ENCODE measurements at regions of chr10 and their contacts with region 1.

Region 1: GRCh38 chr10:58282615-58283014 is 13.7 kb downstream of the CISD1 start:
- DNase-seq: peak; percentile 32
- H3K4me3 Mint-ChIP-seq: peak overlapping the region; percentile 38
- H3K27ac Mint-ChIP-seq: peak overlapping the region; percentile 1
- H3K4me1 Mint-ChIP-seq: peaks cover 31% of the 10 kb centered on the region
- H3K27me3 Mint-ChIP-seq: no peaks in the 10 kb centered on the region

Region 2: DNA sequence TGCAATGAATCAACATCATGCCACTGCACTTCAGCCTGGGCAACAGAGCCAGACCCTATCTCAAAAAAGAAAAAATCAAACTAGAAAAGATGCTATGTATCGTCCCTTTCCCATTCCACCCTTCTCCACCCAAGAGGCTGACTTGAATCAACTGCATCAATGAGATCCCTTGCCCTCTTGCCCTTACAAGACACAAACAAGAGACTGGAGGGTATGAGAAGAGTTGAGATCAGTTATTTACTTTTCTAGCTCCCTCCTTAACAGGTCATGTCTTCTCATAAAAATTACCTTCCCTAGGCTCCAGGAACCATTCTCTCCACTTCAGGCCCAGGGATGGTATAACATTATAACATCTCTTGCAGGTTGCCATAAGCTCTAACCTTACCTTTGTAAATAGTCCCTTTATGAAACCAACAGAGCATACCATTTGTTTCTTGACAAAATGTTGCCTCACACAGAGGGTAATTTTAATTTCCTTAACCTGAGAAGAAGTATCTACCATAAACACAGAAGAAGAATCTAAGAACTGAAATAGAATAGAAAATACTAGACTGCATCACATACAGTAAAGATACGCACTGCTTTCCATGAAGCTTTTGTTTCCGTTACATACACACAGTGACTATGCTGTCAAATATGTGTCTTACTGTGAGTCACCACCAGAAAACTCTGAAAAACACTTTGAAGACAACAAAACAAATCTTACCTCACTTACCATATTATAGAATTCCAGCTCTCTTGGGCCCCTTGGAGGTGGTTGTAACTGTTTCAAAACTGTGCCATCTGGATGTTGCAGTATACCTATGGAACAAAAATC is 45.4 kb before region 1 on chr10:
- intact Hi-C with region 1: loop called (anchors 1 kb)
- DNase-seq: no peak
- H3K4me3 Mint-ChIP-seq: no peak overlapping the region
- H3K27ac Mint-ChIP-seq: peak overlapping the region; percentile 20
- H3K4me1 Mint-ChIP-seq: peaks cover 18% of the 10 kb centered on the region
- H3K27me3 Mint-ChIP-seq: no peaks in the 10 kb centered on the region

Region 3: DNA sequence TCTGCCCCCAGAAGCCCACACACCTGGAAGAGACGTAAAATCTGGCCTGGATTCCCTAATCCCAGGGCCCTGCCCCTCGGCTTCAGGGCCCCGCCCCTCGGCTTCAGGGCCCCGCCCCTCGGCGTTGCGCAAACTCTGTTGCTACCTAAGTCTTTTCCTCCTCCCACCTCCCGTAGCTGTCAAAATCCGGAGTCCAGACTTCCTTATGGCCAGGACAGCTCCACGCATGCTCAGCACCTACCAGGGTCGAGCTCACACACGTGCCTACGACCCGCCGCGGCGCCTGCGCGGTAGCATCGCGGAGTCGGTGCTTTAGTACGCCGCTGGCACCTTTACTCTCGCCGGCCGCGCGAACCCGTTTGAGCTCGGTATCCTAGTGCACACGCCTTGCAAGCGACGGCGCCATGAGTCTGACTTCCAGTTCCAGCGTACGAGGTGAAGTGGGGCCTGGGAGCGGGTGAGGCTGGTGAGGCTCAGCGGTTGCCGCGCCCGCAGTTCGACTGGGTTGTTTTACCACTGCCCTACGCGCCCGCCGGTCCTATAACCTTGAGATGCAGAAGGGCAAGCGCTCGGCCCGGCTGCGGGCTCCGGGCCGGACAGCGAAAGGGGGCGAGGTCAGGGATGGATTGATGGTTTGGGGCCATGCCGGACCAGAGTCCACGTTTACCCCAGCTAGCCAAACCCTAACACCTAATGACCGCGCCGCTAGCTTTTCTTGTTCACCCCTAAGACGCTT is 13.6 kb before region 1 on chr10 and contains the start of gene CISD1:
- intact Hi-C with region 1: loop called (anchors 1 kb)
- DNase-seq: peak; percentile 94
- H3K4me3 Mint-ChIP-seq: peak within 1 kb of the TSS; percentile 90
- H3K27ac Mint-ChIP-seq: peak within 1 kb of the TSS; percentile 95
- H3K4me1 Mint-ChIP-seq: peaks cover 20% of the 10 kb centered on the region
- H3K27me3 Mint-ChIP-seq: no peaks in the 10 kb centered on the region
- total RNA-seq, gene CISD1: 39.7 and 43.2 TPM in 2 replicates

Region 4: GRCh38 chr10:58334817-58335305 is 52.2 kb after region 1 on chr10 and contains the start of gene UBE2D1:
- intact Hi-C with region 1: loop called (anchors 2 kb)
- DNase-seq: peak; percentile 69
- H3K4me3 Mint-ChIP-seq: peak within 1 kb of the TSS; percentile 99
- H3K27ac Mint-ChIP-seq: peak within 1 kb of the TSS; percentile 81
- H3K4me1 Mint-ChIP-seq: peaks cover 23% of the 10 kb centered on the region
- H3K27me3 Mint-ChIP-seq: peaks cover 16% of the 10 kb centered on the region
- total RNA-seq, gene UBE2D1: 14.8 and 14.9 TPM in 2 replicates

Region 5: DNA sequence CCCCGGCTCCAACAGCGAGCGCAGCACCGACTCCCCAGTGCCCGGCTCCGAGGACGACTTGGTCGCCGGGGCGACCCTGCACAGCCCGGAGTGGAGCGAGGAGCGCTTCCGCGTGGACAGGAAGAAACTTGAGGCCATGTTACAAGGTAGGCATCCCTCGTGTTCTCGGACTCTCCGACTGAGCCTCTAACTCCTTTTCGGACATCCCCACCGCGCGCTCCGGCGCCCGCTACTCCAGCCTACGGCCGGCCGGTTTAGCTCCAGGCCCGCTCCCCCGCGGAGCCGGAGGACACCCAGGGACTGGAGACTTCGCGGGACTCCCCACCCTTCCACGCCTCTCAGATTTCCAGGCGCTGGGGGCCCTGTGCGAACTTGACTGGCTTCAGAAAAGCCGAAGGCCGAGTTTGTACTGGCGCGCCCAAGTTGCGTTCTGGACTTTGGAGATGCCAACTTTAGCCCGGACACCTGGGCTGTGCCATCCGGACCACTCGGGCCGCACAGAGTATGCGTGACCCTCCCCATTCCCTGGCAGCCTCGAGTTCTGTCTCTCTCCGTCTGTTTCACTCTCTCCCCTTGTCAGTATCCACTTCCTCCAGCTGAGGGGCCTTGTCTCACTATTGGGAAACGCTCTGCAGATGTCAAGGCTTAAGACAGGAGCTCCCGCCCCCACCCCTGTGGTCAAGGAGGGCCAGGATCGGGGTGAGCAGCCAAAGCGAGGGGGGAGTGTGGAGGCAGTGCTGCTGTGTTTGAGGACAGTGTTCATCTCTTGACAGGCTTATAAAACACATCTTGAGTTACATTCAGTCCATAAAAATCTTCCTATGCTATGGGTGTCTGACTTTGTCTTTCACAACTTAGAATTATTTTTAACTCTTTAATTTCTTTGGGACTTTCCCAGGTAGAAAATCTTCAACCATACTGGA is 230.8 kb after region 1 on chr10:
- intact Hi-C with region 1: loop called (anchors 10 kb)
- DNase-seq: no peak
- H3K4me3 Mint-ChIP-seq: peak overlapping the region; percentile 68
- H3K27ac Mint-ChIP-seq: no peak overlapping the region
- H3K4me1 Mint-ChIP-seq: peaks cover 16% of the 10 kb centered on the region
- H3K27me3 Mint-ChIP-seq: peaks cover 33% of the 10 kb centered on the region

Measured in activated T-helper 2 cell treated with anti-CD3 and anti-CD28 coated beads, Interferon-gamma antibody, Interleukin-2, Interleukin-4, amounts not matched to agents 10 μg/mL and 5 μg/mL and 100 μg/mL, durations not matched to agents 14 hours and 24 hours and 36 hours (primary cell).